ENCODE measurements at regions of chr12 and their contacts with region 1.

Region 1: DNA sequence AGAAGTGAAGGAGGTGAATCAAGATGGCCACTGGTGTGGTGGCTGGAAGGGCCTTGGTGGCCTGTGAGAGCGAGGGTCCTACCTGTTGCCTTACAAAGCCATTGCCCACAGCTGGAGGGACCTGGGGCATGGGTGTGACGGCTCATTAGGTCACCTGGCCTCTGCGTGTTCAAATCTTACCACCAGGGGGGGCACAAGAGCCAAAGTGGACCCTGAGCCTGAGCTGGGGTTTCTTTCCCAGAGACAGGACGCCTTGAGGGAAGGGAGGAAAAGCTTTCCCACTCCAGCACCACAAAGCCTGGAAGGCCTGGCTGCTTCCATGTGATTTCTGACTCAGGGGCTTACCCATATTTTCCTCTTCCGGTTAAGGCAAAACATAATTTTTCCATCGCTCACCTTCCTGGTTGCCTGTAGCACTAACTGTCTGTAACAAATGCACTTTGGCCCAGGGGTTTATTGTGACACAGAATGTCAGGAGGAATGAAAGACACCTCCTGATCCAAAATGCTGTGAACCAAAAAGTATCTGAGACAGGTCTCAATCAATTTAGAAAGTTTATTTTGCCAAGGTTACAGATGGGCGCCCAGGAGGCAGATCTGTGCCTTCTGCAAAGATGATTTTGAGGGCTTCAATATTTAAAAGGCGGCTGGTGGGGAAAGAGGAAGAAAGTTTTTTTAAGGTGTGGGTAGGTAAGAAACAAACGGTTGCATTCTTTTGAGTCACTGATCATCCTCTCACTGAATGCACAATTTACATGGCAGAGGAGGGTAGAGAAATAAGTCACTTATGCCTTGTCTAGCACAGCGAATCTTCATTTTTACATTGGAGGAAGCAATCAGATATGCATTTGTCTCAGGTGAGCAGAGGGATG is 4.3 kb upstream of the CD9 start:
- DNase-seq: peak; percentile 58
- H3K4me3 Mint-ChIP-seq: no peak overlapping the region
- H3K27ac Mint-ChIP-seq: peak overlapping the region; percentile 18
- H3K4me1 Mint-ChIP-seq: peaks cover 18% of the 10 kb centered on the region
- H3K27me3 Mint-ChIP-seq: peaks cover 27% of the 10 kb centered on the region

Region 2: DNA sequence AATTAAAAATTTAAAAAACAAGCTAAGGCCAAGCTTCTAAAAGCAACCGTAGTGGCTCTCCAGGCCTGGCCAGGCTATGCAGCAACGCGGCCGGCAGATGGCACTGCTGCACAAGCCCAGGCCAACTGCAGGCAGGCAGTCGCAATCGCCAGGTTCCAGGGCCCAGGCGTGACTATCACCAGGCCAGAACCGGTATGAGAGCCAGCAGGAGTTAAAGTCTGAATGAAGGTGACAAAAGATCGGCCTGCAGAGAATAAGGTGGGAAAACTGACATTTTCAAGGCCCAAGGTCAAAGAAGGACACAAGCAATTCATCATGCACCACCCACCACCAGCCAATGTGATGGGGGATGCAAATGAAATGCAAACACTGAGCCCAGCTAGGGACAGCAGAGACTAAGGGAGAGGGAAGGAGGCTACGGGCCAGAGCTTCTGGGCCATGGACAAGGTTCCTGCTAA is 207.2 kb before region 1 on chr12:
- intact Hi-C with region 1: loop called (anchors 10 kb)
- DNase-seq: peak; percentile 53
- H3K4me3 Mint-ChIP-seq: no peak overlapping the region
- H3K27ac Mint-ChIP-seq: no peak overlapping the region
- H3K4me1 Mint-ChIP-seq: no peaks in the 10 kb centered on the region
- H3K27me3 Mint-ChIP-seq: peaks cover 3% of the 10 kb centered on the region

Region 3: GRCh38 chr12:6062757-6063735 is 132.9 kb before region 1 on chr12:
- intact Hi-C with region 1: loop called (anchors 2 kb)
- DNase-seq: peak; percentile 30
- H3K4me3 Mint-ChIP-seq: no peak overlapping the region
- H3K27ac Mint-ChIP-seq: no peak overlapping the region
- H3K4me1 Mint-ChIP-seq: peaks cover 4% of the 10 kb centered on the region
- H3K27me3 Mint-ChIP-seq: peaks cover 20% of the 10 kb centered on the region

Region 4: DNA sequence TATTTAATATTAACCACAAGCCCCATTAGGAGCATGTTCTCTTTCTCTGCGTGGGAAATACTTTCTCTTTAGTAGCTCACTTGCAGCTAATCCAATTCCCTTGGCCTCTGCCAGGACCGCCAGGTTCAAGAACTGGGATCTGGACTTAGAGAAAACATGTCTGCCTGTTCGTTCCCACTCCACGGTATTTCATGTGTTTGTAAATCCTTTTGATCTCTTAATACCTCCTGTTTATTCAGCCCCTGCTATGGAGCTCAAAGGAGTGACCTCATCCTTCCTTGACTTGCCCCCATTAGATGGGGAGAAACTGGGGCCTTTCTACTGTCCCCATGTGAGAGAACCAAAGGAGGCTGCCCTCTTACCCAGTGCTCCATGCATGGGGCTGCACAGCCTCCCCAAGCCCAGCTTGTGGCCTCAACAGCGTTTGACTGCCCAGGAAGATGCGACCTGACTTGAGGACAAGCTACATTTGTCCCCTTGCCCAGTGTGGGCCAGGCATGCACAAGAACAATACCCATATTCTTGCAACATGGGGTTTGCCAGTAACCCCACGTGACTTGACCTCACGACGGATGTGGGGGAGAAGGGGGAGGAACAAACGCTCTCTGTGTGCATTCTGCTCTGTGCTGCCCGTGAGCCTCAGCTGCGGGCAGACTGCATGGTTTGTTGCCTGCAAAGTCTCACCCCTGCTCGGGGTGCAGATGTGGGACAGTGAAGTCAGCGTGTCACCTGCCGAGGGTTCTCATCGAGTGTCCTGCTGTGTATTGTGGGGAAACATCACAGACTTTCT is 34.6 kb after region 1 on chr12:
- intact Hi-C with region 1: loop called (anchors 1 kb)
- DNase-seq: peak; percentile 72
- H3K4me3 Mint-ChIP-seq: peak overlapping the region; percentile 27
- H3K27ac Mint-ChIP-seq: peak overlapping the region; percentile 86
- H3K4me1 Mint-ChIP-seq: peaks cover 22% of the 10 kb centered on the region
- H3K27me3 Mint-ChIP-seq: no peaks in the 10 kb centered on the region

Region 5: GRCh38 chr12:6278439-6279255 is 82.7 kb after region 1 on chr12:
- intact Hi-C with region 1: loop called (anchors 1 kb)
- DNase-seq: peak; percentile 79
- H3K4me3 Mint-ChIP-seq: peak overlapping the region; percentile 78
- H3K27ac Mint-ChIP-seq: peak overlapping the region; percentile 73
- H3K4me1 Mint-ChIP-seq: peaks cover 9% of the 10 kb centered on the region
- H3K27me3 Mint-ChIP-seq: peaks cover 44% of the 10 kb centered on the region

Region 6: DNA sequence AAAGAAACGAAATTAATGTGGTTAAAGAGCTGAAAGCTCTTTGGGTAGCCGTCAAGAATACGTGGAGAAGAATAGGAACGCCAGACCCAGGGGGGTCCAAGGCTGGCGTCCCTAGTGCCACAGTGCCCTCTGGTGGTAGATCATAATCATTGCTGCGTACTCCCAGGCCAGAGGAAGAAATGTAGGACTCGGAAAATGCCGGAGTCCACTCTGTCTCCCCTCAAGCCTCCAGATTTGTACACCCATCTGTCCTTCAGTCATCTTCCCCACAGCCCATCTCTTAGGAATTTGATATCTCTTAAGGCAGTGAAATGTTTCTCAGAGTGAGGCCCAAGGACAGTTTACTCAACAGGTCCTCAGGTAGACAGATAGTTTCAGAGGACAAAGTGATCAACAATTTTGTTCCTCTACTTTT is 89.2 kb after region 1 on chr12:
- intact Hi-C with region 1: loop called (anchors 1 kb)
- DNase-seq: peak; percentile 40
- H3K4me3 Mint-ChIP-seq: no peak overlapping the region
- H3K27ac Mint-ChIP-seq: no peak overlapping the region
- H3K4me1 Mint-ChIP-seq: no peaks in the 10 kb centered on the region
- H3K27me3 Mint-ChIP-seq: peaks cover 24% of the 10 kb centered on the region

Measured in activated T-helper 2 cell treated with anti-CD3 and anti-CD28 coated beads, Interferon-gamma antibody, Interleukin-2, Interleukin-4, amounts not matched to agents 10 μg/mL and 5 μg/mL and 100 μg/mL, durations not matched to agents 14 hours and 24 hours and 36 hours (primary cell).